Pancreas (tissue), 10 donors: ENCODE measurements at regions of chr17 and their contacts with region 1.

Region 1: GRCh38 chr17:32253117-32253611 is 12.5 kb upstream of the RHBDL3 start:
- DNase-seq: peak; percentile 67 to 87 (median 84)
- ATAC-seq: peak; percentile 84 to 96 (median 95)
- H3K4me3 ChIP-seq: no peak overlapping the region
- H3K27ac ChIP-seq: no peak overlapping the region
- H3K4me1 ChIP-seq: peaks cover 0 to 10% (median 4%) of the 10 kb centered on the region in 3 donors
- H3K27me3 ChIP-seq: no peaks in the 10 kb centered on the region
- CTCF ChIP-seq: peak; percentile 89 to 98 (median 94)

Region 2: DNA sequence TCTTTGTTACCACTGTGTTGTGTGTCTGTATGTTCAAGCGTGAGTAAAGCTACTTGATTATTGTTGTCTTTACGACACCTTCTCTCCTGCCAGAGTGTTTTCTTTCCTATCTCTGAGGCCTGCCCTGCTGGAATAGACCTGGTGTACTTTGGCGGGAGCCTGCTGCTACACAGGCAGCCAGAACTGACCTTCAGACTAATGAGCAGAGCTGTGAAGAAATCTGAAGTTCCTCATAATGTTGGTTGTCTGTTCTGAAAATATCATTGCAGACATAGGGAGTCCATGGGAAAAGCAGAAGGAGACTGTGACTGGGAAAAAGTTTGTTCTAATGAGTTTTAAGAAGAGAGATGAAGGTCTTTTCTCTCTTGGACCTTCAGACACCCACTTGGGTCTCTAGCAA is 101.0 kb before region 1 on chr17:
- intact Hi-C with region 1: no loop called
- DNase-seq: peak in 3 of 6 donors; percentile 44 to 49 (median 45)
- ATAC-seq: peak; percentile 87 to 98 (median 94)
- H3K4me3 ChIP-seq: no peak overlapping the region
- H3K27ac ChIP-seq: peak overlapping the region in 2 of 4 donors; percentile 5 to 33
- H3K4me1 ChIP-seq: peaks cover 11 to 14% (median 14%) of the 10 kb centered on the region in 3 donors
- H3K27me3 ChIP-seq: no peaks in the 10 kb centered on the region
- CTCF ChIP-seq: no peak

Region 3: DNA sequence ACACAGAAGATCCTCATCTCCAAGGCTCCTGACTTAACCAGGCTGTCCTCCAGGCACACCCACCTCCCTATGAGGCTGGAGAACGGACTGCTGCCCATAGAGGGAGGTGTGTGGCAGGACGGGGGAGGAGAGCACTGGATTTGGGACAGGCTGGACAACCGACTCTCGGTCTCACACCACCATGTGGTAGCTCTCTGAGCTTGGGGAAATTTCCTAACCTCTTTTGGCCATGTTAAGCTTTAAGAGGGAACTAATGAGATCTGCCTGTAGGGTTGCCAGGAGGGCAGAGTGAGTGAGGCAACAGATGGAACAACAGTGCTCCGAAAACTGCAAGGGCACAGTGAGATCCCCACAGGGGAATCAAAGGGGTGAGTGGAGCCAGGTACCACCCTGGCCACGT is 45.1 kb after region 1 on chr17:
- intact Hi-C with region 1: no loop called
- DNase-seq: no peak
- ATAC-seq: peak in 1 of 4 donors; percentile 22
- H3K4me3 ChIP-seq: no peak overlapping the region
- H3K27ac ChIP-seq: no peak overlapping the region
- H3K4me1 ChIP-seq: no peaks in the 10 kb centered on the region
- H3K27me3 ChIP-seq: no peaks in the 10 kb centered on the region
- CTCF ChIP-seq: no peak

Region 4: GRCh38 chr17:32319548-32319905 is 66.4 kb after region 1 on chr17:
- intact Hi-C with region 1: loop called in 2 of 3 experiments (anchors 2 to 5 kb)
- DNase-seq: peak; percentile 55 to 91 (median 80)
- ATAC-seq: peak; percentile 87 to 95 (median 94)
- H3K4me3 ChIP-seq: no peak overlapping the region
- H3K27ac ChIP-seq: no peak overlapping the region
- H3K4me1 ChIP-seq: no peaks in the 10 kb centered on the region
- H3K27me3 ChIP-seq: no peaks in the 10 kb centered on the region
- CTCF ChIP-seq: peak; percentile 82 to 92 (median 83)